Naive thymus-derived CD8-positive, alpha-beta T cell (primary cell): ENCODE measurements at regions of chr17 and their contacts with region 1.

Region 1: GRCh38 chr17:42405963-42406495 is 17.0 kb downstream of the CAVIN1 start:
- DNase-seq: peak; percentile 70 to 88 (median 80)
- ATAC-seq: peak; percentile 85 to 86
- H3K4me3 Mint-ChIP-seq: peak overlapping the region in 2 of 10 donors; percentile 8 to 22
- H3K27ac Mint-ChIP-seq: peak overlapping the region in 5 of 10 donors; percentile 33 to 61 (median 53)
- H3K4me1 Mint-ChIP-seq: peaks cover 10 to 21% (median 20%) of the 10 kb centered on the region in 4 donors
- H3K27me3 Mint-ChIP-seq: no peaks in the 10 kb centered on the region

Region 2: DNA sequence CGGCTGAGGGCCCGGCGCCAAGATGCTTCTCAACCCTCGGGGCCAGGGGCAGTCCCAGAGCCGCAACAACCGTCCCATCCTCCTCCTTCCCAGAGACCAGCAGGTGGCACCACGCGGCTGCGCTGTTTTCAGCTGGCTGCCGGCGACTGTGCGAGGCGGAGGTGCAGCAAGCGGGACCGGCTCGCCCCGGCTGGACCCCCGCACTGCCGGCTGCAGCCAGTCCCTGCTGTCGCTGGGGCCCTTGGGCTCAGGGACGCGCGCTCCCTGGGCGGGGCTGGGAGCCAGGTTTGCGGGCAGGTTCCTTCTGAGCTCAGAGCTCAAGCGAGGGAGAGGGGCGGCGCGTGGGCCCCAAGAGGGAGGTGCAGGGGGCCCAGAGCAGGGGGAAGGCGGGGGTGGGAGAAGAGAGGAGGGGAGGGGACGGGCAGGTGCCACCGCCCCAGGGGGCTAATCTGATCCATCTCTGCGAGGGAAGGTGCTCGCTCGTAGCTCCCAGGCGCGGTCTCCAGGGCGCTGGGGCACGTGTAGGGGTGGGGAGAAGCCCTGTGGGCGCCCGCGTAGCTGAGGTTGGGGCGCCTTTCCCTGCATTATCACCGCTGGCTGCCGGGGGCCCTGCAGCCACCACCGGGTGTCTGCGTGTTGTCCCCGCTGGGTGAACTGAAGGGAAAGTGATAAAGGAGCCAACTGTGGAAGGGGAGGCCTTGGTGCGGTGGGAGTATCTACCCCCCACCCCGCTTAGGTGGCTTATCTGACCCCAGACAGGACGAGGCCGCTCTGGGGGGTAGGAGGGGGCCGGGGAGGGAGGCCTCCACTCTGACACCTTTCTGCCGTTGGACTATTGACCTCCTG is 93.5 kb before region 1 on chr17:
- POLR2A ChIA-PET with region 1: interaction called, 39 read pairs
- DNase-seq: peak; percentile 66 to 87 (median 74)
- ATAC-seq: peak; percentile 72 to 73
- H3K4me3 Mint-ChIP-seq: peak overlapping the region; percentile 61 to 86 (median 74)
- H3K27ac Mint-ChIP-seq: peak overlapping the region; percentile 84 to 93 (median 90)
- H3K4me1 Mint-ChIP-seq: peaks cover 32 to 80% (median 66%) of the 10 kb centered on the region in 4 donors
- H3K27me3 Mint-ChIP-seq: no peaks in the 10 kb centered on the region

Region 3: DNA sequence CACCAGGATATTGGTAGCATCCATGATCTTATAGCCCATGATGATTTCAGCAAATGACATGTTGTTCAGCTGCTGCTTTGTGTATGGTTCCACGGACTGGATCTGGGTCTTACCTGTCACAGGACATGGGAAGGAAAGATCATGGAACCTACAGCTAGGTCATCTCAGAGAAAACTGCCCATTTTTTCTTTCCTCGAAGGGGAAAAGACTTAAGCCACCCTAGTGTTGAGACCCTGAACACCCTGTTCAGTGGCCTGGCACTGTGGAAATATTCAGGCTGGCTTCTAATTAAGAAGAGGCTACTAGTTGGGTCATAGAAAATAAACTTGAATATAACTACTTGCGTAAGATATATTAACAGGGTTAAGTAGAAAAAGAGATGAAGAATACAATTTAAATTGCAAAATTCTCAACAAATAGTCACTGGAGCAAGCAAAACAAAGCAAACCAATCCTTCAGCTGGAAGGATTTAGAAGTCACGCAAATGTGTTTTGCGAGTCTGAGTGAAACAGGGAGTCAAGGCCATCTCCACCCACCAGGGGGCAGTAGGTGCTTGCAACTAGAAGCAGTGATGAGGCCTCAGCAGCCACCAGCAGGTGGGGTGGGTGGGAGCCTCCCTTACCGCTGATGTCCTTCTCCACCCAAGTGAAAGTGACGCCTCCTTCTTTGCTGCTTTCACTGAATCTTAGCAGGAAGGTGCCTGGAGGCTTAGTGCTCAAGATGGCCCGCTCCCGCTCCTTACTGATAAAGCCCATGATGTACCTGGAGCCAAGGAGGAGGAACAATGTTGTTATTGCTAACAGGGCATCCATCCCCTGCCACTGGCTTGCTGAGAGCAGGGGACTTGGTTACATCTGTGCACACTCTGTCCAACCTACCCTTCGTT is 83.4 kb before region 1 on chr17:
- POLR2A ChIA-PET with region 1: interaction called, 30 read pairs
- DNase-seq: peak; percentile 90 to 98 (median 93)
- ATAC-seq: peak; percentile 94 to 96
- H3K4me3 Mint-ChIP-seq: no peak overlapping the region
- H3K27ac Mint-ChIP-seq: peak overlapping the region; percentile 19 to 94 (median 82)
- H3K4me1 Mint-ChIP-seq: peaks cover 8 to 52% (median 44%) of the 10 kb centered on the region in 4 donors
- H3K27me3 Mint-ChIP-seq: no peaks in the 10 kb centered on the region

Region 4: DNA sequence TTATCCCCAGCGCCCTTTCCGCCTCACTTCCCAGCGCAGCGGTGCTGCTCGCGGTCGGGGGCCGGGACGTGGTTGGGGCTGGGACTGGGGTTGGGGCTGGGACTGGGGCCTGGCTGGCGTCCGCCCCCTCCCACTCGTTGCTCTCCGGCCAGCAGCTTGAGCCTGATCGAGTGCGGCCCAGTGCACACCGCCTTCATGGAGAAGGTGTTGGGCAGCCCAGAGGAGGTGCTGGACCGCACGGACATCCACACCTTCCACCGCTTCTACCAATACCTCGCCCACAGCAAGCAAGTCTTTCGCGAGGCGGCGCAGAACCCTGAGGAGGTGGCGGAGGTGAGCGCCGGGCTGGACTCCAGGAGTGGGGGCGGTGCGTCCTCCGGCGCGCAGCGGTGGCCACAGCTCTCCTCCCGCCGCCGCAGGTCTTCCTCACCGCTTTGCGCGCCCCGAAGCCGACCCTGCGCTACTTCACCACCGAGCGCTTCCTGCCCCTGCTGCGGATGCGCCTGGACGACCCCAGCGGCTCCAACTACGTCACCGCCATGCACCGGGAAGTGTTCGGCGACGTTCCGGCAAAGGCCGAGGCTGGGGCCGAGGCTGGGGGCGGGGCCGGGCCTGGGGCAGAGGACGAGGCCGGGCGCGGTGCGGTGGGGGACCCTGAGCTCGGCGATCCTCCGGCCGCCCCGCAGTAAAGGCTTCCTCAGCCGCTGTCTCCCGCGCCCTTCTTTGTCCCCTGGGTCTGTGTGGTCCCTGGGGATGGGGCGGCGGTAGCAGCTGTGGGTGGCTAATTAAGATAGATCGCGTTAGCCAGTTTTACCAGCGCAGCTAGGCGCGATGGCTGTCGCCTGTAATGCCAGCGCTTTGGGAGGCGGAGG is 148.5 kb after region 1 on chr17:
- POLR2A ChIA-PET with region 1: no interaction called
- DNase-seq: peak; percentile 61 to 88 (median 74)
- ATAC-seq: peak; percentile 91 to 93
- H3K4me3 Mint-ChIP-seq: peak overlapping the region; percentile 84 to 95 (median 92)
- H3K27ac Mint-ChIP-seq: peak overlapping the region; percentile 83 to 96 (median 94)
- H3K4me1 Mint-ChIP-seq: peaks cover 11 to 51% (median 33%) of the 10 kb centered on the region in 4 donors
- H3K27me3 Mint-ChIP-seq: no peaks in the 10 kb centered on the region